ENCODE measurements at regions of chr9 and their contacts with region 1.

Region 1: GRCh38 chr9:26112724-26113123 is 434.5 kb upstream of the TUSC1 start:
- DNase-seq: no peak
- H3K4me3 ChIP-seq: no peak overlapping the region
- H3K4me3 Mint-ChIP-seq: no peak overlapping the region
- H3K27ac ChIP-seq: no peak overlapping the region
- H3K27ac Mint-ChIP-seq: no peak overlapping the region
- H3K4me1 ChIP-seq: no peaks in the 10 kb centered on the region
- H3K4me1 Mint-ChIP-seq: no peaks in the 10 kb centered on the region
- H3K27me3 ChIP-seq: no peaks in the 10 kb centered on the region
- H3K27me3 Mint-ChIP-seq: no peaks in the 10 kb centered on the region
- CTCF ChIP-seq: no peak

Region 2: DNA sequence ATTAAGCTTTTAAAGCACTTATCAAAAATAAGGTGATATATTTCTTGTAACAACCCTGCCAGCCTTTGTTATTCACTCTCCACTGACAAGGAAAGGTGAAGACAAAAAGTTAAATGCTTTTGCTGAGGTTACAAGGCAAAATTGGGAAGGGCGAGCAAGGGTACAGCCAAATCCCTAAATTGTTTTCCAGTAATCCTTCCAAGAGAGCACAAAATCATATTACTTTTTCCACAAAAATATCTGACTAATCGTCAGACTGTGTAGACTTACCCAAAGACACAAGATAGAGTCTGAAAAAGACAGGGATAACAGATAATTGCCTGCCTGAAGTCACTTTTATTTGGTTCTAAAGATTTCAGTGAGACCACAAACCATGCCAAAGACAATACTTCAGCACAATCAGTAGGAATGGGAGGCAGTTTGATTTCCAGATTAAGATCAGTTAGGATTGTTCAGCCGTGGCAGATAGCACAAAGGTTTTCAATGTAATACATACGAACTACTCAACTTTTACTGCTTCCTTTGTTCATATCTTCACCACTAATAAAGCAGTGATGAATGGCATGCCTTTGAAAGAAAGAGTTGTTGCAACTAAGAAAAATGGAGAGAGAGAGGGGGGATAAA is 50.7 kb before region 1 on chr9:
- intact Hi-C with region 1: loop called in 1 of 2 experiments (anchors 5 kb)
- DNase-seq: no peak
- H3K4me3 ChIP-seq: no peak overlapping the region
- H3K4me3 Mint-ChIP-seq: no peak overlapping the region
- H3K27ac ChIP-seq: no peak overlapping the region
- H3K27ac Mint-ChIP-seq: no peak overlapping the region
- H3K4me1 ChIP-seq: no peaks in the 10 kb centered on the region
- H3K4me1 Mint-ChIP-seq: no peaks in the 10 kb centered on the region
- H3K27me3 ChIP-seq: no peaks in the 10 kb centered on the region
- H3K27me3 Mint-ChIP-seq: no peaks in the 10 kb centered on the region
- CTCF ChIP-seq: no peak

Region 3: GRCh38 chr9:26219961-26220360 is 107.2 kb after region 1 on chr9:
- intact Hi-C with region 1: no loop called
- DNase-seq: no peak
- H3K4me3 ChIP-seq: no peak overlapping the region
- H3K4me3 Mint-ChIP-seq: no peak overlapping the region
- H3K27ac ChIP-seq: no peak overlapping the region
- H3K27ac Mint-ChIP-seq: no peak overlapping the region
- H3K4me1 ChIP-seq: no peaks in the 10 kb centered on the region
- H3K4me1 Mint-ChIP-seq: no peaks in the 10 kb centered on the region
- H3K27me3 ChIP-seq: no peaks in the 10 kb centered on the region
- H3K27me3 Mint-ChIP-seq: no peaks in the 10 kb centered on the region
- CTCF ChIP-seq: no peak